GM23248 (cell line): ENCODE measurements at regions of chr12 and their contacts with region 1.

Region 1: DNA sequence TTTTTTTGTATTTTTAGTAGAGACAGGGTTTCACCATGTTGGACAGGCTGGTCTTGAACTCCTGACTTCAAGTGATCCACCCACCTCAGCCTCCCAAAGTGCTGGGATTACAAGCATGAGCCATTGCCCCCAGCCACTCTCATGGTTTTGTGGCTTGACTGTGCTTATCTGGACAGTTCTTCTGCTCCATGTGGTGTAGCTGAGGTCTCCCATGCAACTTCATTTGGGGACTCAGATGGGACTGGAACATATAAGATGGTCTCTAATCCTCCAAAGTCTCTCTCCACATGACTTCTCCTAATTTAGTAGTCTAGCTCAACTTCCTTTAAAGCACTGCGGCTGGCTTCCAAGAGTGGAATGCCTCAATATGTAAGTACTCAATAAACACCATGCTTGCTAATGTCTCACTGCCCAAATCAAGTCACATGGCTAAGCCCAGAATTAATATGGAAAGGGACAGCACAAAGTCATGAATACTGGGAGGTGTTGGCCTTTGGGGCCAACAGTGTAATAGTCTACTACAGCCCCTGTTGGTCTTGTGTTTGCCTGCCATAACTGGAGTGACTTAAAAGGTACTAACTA is 7.4 kb downstream of the INHBC start:
- DNase-seq: no peak
- H3K4me3 ChIP-seq: no peak overlapping the region
- H3K27ac ChIP-seq: no peak overlapping the region
- H3K4me1 ChIP-seq: no peaks in the 10 kb centered on the region
- H3K27me3 ChIP-seq: no peaks in the 10 kb centered on the region

Region 2: GRCh38 chr12:57299514-57300016 is 142.4 kb before region 1 on chr12:
- in situ Hi-C with region 1: no loop called
- DNase-seq: no peak
- H3K4me3 ChIP-seq: no peak overlapping the region
- H3K27ac ChIP-seq: no peak overlapping the region
- H3K4me1 ChIP-seq: no peaks in the 10 kb centered on the region
- H3K27me3 ChIP-seq: no peaks in the 10 kb centered on the region

Region 3: GRCh38 chr12:57319678-57320469 is 122.1 kb before region 1 on chr12:
- in situ Hi-C with region 1: loop called (anchors 10 kb)
- DNase-seq: no peak
- H3K4me3 ChIP-seq: no peak overlapping the region
- H3K27ac ChIP-seq: no peak overlapping the region
- H3K4me1 ChIP-seq: no peaks in the 10 kb centered on the region
- H3K27me3 ChIP-seq: no peaks in the 10 kb centered on the region